ENCODE measurements at regions of chr11 and their contacts with region 1.

Region 1: DNA sequence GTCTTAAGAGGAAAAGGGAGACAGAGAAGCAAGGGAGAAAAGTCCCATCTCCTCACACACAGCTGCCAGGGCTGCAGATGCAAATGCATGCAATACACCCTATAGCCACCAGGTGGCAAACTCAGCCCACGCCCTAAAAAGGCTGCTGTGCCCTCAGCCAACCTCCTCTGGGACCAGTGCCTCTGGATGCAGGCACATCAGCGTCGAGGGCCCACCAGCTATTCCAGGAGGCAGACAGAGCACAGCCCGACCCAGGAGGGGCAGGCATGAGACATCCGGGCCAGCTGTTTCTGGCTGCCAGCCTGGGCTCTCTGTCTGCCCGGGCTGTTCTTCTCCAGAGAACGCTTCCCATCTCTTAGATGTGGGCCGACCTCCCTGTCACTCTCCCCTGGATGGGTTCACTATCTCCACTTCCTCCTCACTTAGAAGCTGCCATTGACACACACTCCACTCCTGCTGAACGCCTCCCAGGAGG is 39.7 kb downstream of the TPBGL start:
- DNase-seq: peak; percentile 83
- H3K4me3 Mint-ChIP-seq: no peak overlapping the region
- H3K27ac Mint-ChIP-seq: peak overlapping the region; percentile 47
- H3K4me1 Mint-ChIP-seq: peaks cover 28% of the 10 kb centered on the region
- H3K27me3 Mint-ChIP-seq: no peaks in the 10 kb centered on the region

Region 2: DNA sequence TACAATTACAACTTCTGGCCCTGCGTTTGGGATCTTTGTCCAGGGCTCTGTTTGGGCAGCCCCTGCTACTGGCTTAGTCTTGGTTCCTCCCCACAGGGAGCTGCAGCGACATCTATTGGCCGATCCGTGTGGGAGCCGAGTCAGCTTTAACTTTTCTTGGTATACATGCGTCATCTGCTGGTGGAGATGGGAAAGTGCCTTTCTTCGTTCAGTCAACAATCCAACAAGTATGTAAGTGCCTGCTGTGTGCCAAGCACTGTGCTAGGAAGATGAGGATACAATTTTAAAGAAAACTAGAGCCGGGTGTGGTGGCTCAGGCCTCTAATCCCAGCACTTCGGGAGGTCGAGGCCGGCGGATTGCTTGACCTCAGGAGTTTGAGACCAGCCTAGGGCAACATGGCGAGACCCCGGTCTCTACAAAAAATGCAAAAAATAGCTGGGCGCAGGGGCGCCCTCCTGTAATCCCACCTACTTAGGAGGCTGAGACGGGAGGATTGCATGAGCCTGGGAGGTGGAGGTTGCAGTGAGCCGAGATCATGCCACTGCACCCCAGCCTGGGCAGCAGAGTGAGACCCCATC is 31.5 kb before region 1 on chr11:
- CTCF ChIA-PET with region 1: interaction called, 28 read pairs
- POLR2A ChIA-PET with region 1: no interaction called
- intact Hi-C with region 1: no loop called
- DNase-seq: peak; percentile 91
- H3K4me3 Mint-ChIP-seq: no peak overlapping the region
- H3K27ac Mint-ChIP-seq: peak overlapping the region; percentile 1
- H3K4me1 Mint-ChIP-seq: no peaks in the 10 kb centered on the region
- H3K27me3 Mint-ChIP-seq: peaks cover 7% of the 10 kb centered on the region

Region 3: GRCh38 chr11:75328426-75329277 is 48.4 kb after region 1 on chr11:
- CTCF ChIA-PET with region 1: interaction called, 11 read pairs
- POLR2A ChIA-PET with region 1: interaction called, 3 read pairs
- intact Hi-C with region 1: loop called (anchors 2 kb)
- DNase-seq: peak; percentile 77
- H3K4me3 Mint-ChIP-seq: no peak overlapping the region
- H3K27ac Mint-ChIP-seq: peak overlapping the region; percentile 70
- H3K4me1 Mint-ChIP-seq: peaks cover 60% of the 10 kb centered on the region
- H3K27me3 Mint-ChIP-seq: no peaks in the 10 kb centered on the region

Region 4: GRCh38 chr11:75365711-75366181 is 85.5 kb after region 1 on chr11:
- CTCF ChIA-PET with region 1: interaction called, 18 read pairs
- POLR2A ChIA-PET with region 1: no interaction called
- intact Hi-C with region 1: no loop called
- DNase-seq: no peak
- H3K4me3 Mint-ChIP-seq: no peak overlapping the region
- H3K27ac Mint-ChIP-seq: no peak overlapping the region
- H3K4me1 Mint-ChIP-seq: peaks cover 2% of the 10 kb centered on the region
- H3K27me3 Mint-ChIP-seq: peaks cover 1% of the 10 kb centered on the region

Region 5: DNA sequence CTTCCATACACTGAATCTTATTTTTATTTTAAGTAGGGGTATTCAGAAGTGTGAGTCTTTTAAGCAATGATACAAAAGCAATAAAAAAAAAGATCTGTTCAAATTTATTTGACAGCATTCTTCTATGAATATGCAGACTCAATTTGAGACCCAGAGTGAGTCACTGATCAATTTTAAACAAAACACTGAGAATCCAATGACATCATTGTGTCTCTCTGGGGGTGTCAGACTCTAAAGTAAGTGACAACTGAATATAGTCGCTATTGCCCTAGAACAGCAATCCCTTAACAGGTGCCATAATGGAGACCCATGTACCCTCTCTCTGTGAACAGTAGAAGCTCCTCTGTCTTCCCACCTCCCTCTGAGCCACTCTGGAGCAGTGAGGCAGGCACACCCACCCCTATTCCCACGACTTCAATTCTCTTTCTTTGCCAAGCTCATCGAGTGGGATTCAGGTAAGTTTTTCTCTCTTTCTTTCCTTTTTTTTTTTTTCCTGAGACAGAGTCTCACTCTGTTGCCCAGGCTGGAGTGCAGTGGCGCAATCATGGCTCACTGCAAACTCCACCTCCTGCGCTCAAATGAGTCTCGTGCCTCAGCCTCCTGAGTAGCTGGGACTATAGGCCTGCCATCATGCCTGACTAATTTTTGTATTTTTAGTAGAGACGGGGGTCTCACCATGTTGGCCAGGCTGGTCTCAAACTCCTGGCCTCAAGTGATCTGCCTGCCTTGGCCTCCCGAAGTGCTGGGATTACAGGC is 114.0 kb after region 1 on chr11:
- CTCF ChIA-PET with region 1: interaction called, 435 read pairs
- POLR2A ChIA-PET with region 1: no interaction called
- intact Hi-C with region 1: no loop called
- DNase-seq: no peak
- H3K4me3 Mint-ChIP-seq: no peak overlapping the region
- H3K27ac Mint-ChIP-seq: no peak overlapping the region
- H3K4me1 Mint-ChIP-seq: peaks cover 5% of the 10 kb centered on the region
- H3K27me3 Mint-ChIP-seq: peaks cover 6% of the 10 kb centered on the region

Region 6: DNA sequence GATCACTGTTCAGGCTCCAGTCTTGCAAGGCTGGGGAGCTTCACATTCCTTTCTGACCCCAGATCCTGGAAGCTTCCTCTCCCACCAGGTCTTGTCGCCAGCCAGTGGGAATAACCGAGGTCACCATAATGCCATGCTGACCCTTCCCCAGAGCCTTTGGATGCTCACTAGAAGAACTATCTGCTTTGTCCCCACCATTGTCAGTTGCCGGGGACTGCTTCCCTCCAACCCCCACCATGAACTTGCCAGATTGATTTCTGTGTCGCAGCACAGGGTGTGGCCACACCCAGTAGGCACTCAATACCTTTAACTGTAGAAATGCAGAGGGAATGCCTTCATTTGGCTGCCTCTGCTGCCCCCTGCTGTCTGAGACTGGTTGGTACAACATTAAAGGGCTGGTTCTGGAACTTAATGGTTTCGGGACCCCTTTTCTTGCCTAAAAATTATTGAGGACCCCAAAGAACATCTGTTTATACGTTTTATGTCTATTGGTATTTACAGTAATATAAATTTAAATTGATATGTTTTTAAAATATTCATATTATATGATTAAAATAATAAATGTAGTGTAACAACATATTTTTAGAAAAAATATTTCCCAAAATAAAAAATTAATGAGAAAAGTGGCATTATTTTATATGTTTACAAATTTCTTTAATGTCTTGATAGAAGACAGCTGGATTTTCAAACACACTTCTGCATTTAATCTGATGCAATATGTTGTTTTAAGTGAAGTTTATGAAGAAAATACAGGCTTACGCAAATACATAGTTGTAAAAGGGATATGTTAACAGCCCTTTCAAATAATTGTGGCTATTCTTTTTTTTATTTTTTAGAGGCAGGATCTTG is 252.2 kb after region 1 on chr11:
- CTCF ChIA-PET with region 1: interaction called, 4 read pairs
- POLR2A ChIA-PET with region 1: no interaction called
- intact Hi-C with region 1: loop called (anchors 5 kb)
- DNase-seq: peak; percentile 89
- H3K4me3 Mint-ChIP-seq: no peak overlapping the region
- H3K27ac Mint-ChIP-seq: peak overlapping the region; percentile 39
- H3K4me1 Mint-ChIP-seq: peaks cover 37% of the 10 kb centered on the region
- H3K27me3 Mint-ChIP-seq: no peaks in the 10 kb centered on the region